Endothelial cell of umbilical vein (primary cell): ENCODE measurements at regions of chr2 and their contacts with region 1.

Region 1: DNA sequence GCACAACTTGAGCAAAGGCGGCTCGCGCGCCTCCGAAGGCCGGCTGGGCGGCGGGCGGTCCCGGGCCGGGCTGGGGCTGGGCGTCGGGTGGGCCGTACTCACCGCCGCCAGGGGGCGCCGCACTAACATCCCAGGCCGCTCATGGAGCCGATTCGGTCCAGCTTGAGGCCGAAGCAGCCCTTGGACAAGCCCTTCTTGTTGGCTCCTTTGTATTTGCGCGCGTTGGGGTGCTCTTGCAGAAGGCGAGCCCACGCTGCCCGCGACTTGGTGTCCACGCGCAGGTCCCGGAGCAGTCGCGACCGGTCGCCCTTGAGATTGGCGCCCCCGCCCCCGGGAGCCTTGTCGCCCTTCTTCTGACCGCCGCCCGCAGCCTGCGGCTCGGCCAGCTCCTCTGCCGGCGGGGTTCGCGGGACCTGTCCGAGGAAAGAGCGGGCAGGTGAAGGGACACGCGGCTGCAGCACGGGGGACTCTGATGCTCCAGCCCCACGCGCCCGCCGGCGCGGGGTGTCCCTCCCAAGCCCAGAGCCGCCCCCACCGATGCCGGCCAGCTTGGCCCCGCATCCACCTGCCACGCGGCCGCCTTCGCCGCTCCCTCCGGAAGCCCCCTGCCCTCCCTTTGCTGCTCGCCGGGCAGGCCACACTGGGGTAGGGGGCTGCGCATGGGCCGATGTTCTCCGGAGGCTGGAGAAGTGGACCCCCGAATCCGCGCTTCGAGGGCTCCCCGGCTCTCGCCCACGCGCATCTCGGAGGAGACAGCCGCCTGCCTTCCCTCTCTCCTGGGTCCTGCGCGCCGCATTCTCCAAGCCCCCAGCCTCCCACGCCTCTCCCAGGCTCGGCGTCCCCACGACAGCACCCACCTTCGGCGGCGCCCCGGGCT is 655 bp downstream of the NPPC start:
- DNase-seq: peak; percentile 76
- H3K4me3 ChIP-seq: peak overlapping the region in 2 of 3 experiments; percentile 30 to 45
- H3K27ac ChIP-seq: no peak overlapping the region
- H3K4me1 ChIP-seq: peaks cover 15% of the 10 kb centered on the region
- H3K27me3 ChIP-seq: peaks cover 43 to 51% of the 10 kb centered on the region in 2 experiments
- CTCF ChIP-seq: peak; percentile 82 to 88
- POLR2A ChIP-seq: no peak

Region 2: DNA sequence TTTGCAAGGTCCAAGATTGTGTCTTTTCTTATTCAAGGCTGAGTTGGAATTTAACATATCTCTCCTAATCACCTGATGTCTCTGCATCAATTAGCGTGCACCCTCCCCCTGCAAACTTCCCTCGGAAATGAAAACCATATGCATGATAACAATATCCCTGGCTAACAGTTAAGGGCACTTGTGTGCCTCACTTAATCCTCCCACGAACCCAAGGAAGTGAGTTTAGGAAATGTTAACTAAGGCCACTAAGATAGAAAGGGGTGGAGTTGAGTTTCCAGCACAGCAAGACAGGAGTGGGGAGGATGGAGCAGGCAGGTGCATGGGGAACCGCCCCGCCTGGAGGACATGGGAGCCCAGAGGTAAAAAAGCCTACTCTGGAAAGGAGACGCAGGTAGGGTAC is 269.6 kb before region 1 on chr2:
- CTCF ChIA-PET with region 1: no interaction called
- POLR2A ChIA-PET with region 1: no interaction called
- dilution Hi-C with region 1: no loop called
- intact Hi-C with region 1: no loop called
- DNase-seq: no peak
- H3K4me3 ChIP-seq: no peak overlapping the region
- H3K27ac ChIP-seq: no peak overlapping the region
- H3K4me1 ChIP-seq: no peaks in the 10 kb centered on the region
- H3K27me3 ChIP-seq: no peaks in the 10 kb centered on the region
- CTCF ChIP-seq: no peak
- POLR2A ChIP-seq: no peak

Region 3: GRCh38 chr2:231961349-231962166 is 36.0 kb after region 1 on chr2 and contains the start of gene DIS3L2:
- CTCF ChIA-PET with region 1: interaction called, 9 read pairs
- POLR2A ChIA-PET with region 1: interaction called, 3 read pairs
- dilution Hi-C with region 1: no loop called
- intact Hi-C with region 1: loop called (anchors 1 kb)
- DNase-seq: peak; percentile 82
- H3K4me3 ChIP-seq: peak within 1 kb of the TSS; percentile 69 to 84 (median 80)
- H3K27ac ChIP-seq: peak within 1 kb of the TSS; percentile 51
- H3K4me1 ChIP-seq: peaks cover 5% of the 10 kb centered on the region
- H3K27me3 ChIP-seq: no peaks in the 10 kb centered on the region
- CTCF ChIP-seq: no peak
- POLR2A ChIP-seq: peak; percentile 86
- total RNA-seq, gene DIS3L2: 31.2 and 31.5 TPM in 2 replicates

Region 4: DNA sequence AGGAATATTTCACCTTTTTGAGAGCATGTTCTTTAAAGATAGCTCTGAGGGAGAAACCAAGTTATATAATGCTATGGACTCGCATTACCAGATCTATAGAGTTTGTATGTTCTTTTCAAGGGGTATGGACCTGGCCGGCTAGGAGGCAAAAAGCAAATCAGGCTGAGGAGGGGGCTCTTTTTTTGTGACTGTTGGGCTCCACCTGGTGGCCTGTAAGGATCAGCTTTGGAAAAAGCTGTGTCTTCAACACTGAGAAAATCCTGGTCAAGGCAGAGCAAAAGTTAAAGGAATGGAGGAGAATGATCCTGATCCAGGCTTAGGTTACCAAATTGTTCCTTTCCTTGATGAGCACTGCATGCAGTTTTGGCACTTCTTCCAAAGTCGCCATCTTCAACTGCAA is 216.5 kb after region 1 on chr2:
- CTCF ChIA-PET with region 1: interaction called, 149 read pairs
- POLR2A ChIA-PET with region 1: no interaction called
- dilution Hi-C with region 1: no loop called
- intact Hi-C with region 1: loop called (anchors 1 kb)
- DNase-seq: peak; percentile 41
- H3K4me3 ChIP-seq: no peak overlapping the region
- H3K27ac ChIP-seq: no peak overlapping the region
- H3K4me1 ChIP-seq: peaks cover 12% of the 10 kb centered on the region
- H3K27me3 ChIP-seq: no peaks in the 10 kb centered on the region
- CTCF ChIP-seq: peak; percentile 64 to 70
- POLR2A ChIP-seq: no peak

Region 5: GRCh38 chr2:232230557-232230956 is 305.0 kb after region 1 on chr2:
- CTCF ChIA-PET with region 1: interaction called, 12 read pairs
- POLR2A ChIA-PET with region 1: no interaction called
- dilution Hi-C with region 1: no loop called
- intact Hi-C with region 1: loop called (anchors 1 kb)
- DNase-seq: no peak
- H3K4me3 ChIP-seq: no peak overlapping the region
- H3K27ac ChIP-seq: no peak overlapping the region
- H3K4me1 ChIP-seq: no peaks in the 10 kb centered on the region
- H3K27me3 ChIP-seq: no peaks in the 10 kb centered on the region
- CTCF ChIP-seq: peak; percentile 11 to 28
- POLR2A ChIP-seq: no peak

Region 6: DNA sequence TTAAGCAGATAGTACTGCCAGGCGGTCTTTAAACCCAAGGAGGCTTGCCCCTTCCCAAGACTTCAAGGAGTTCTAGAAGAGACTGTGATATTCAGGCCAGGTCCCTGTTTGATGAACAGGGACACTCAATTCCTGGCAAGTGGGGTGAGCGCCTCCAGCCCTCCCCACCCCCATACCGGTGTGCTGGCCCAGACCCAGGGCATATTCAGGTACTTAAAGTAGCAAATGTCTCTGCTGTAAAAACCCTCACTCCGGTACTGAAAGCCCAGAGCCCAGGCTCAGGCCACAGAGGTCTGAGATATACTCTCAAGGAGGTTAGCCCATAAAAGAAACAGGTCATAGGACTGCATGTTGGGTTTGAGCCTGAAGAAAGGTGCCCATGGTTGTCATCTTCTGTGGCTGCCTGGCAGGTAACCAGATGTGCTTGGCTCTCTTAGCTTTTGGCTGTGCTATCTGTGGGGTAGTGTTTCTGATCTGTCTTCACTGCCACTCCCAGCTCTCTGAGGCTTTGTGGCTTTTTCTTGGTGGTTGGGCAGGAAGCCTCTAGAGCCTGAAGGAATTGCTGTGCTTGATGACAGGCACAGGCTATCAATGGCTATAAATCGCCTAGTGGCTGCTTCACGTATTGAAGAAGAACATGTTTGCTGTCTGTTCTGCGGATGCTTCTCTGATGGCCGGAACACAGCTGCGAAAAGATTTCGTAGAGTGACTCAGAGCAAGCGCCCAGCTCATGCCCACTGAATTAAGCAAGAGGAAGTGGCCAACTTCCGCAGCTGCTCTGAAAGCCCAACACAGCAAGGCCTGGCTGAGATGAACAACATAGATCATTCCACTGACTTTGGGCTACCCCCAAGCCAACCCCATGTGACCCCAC is 389.7 kb after region 1 on chr2:
- CTCF ChIA-PET with region 1: interaction called, 25 read pairs
- POLR2A ChIA-PET with region 1: no interaction called
- dilution Hi-C with region 1: no loop called
- intact Hi-C with region 1: no loop called
- DNase-seq: peak; percentile 83
- H3K4me3 ChIP-seq: no peak overlapping the region
- H3K27ac ChIP-seq: peak overlapping the region; percentile 83
- H3K4me1 ChIP-seq: peaks cover 35% of the 10 kb centered on the region
- H3K27me3 ChIP-seq: no peaks in the 10 kb centered on the region
- CTCF ChIP-seq: peak; percentile 20 to 28
- POLR2A ChIP-seq: no peak

Region 7: DNA sequence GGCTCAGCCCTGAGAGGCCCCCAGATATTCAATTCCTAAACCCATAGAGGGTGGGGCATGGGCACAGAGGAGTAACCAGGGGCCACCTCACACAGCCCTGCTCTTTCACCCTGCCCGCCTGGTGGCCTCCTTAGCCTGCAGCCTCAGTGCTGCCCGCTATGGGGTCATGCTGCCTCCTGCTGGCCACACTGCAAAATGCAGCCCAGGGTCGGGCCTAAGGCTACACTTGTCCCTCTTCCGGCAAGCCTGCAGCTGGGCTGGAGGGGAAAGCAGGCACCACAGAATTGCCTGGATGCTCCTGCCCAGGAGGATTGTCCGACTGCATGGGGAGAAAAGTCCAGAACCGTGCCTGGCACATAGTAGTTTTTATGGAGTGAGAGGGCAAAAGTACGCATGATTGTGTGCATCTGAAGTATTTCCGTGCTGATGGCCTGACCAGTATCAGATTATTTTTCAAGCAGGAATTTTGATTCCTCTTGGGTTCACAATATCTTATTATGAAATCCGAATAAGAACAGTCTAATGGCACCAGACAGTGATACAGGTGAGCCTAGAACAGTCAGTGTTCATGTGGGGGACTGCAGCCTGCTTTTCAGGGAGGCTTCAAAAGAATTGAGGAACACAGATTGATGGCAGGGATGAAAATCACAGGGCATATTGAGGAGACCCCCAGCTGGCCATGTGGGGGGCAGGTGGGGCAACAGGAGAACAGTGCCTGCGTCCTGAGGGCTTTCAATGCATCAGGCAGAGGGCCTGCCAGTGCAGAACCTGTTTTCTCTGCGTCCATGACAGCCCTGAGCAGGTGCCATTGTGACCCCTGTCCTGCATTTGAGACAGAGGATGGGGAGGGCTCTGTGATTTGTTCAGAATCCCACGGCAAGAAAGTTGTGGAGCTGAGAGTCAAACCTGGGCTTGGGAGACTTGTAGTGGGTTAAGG is 401.8 kb after region 1 on chr2:
- CTCF ChIA-PET with region 1: interaction called, 112 read pairs
- POLR2A ChIA-PET with region 1: no interaction called
- dilution Hi-C with region 1: no loop called
- intact Hi-C with region 1: loop called (anchors 1 kb)
- DNase-seq: peak; percentile 73
- H3K4me3 ChIP-seq: no peak overlapping the region
- H3K27ac ChIP-seq: no peak overlapping the region
- H3K4me1 ChIP-seq: no peaks in the 10 kb centered on the region
- H3K27me3 ChIP-seq: no peaks in the 10 kb centered on the region
- CTCF ChIP-seq: peak; percentile 74 to 86
- POLR2A ChIP-seq: no peak

Region 8: DNA sequence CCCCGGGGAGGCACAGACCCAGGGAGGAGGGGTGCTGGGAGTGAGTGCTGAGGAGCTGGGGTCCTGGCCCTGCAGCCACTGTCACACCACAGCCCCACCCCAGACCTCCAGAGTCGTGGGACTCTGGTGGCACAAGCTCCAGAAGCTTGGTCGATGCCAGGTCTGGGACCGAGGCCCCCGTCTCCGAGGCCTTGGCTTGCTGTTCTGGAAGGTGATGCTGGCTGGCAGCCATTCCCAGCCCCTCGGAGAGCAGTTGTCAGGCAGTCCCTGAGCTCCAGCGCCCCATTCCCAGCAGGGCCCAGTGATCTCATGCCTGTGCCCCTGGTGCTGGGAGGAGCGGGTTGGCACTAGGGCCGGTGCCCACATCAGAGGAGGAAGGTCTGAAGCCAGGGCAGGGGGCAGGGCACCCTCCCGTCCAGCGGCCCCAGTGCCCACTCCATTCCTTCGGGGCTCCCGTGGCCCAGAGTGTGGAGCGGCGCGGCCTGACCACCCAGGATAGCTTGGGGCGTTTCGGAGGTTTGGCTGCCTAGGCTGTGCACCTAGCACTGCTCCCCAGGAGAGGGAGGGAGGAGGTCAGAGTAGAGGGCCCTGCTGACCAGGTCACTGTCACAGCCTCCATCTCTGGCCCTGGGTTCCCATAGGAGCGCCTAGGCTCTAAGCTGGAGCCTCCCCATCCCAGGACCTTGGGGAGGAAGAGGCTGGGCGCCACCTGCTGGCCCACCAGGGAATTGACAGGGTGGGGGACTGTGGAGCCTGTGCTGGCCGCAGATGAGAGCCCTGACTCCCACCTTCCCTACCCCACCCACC is 513.6 kb after region 1 on chr2:
- CTCF ChIA-PET with region 1: interaction called, 6 read pairs
- POLR2A ChIA-PET with region 1: no interaction called
- dilution Hi-C with region 1: no loop called
- intact Hi-C with region 1: loop called (anchors 1 kb)
- DNase-seq: peak; percentile 10
- H3K4me3 ChIP-seq: no peak overlapping the region
- H3K27ac ChIP-seq: no peak overlapping the region
- H3K4me1 ChIP-seq: no peaks in the 10 kb centered on the region
- H3K27me3 ChIP-seq: peaks cover 0 to 2% of the 10 kb centered on the region in 2 experiments
- CTCF ChIP-seq: peak; percentile 14 to 46
- POLR2A ChIP-seq: no peak